Activated B cell treated with CpG ODN at 0.5 μM for 24 hours (primary cell): ENCODE measurements at regions of chr14 and their contacts with region 1.

Region 1: GRCh38 chr14:76812211-76813044 is at the start of gene ANGEL1:
- DNase-seq: peak; percentile 97
- ATAC-seq: peak; percentile 95
- H3K4me3 Mint-ChIP-seq: peak within 1 kb of the TSS; percentile 95
- H3K27ac Mint-ChIP-seq: peak within 1 kb of the TSS; percentile 91
- H3K4me1 Mint-ChIP-seq: peaks cover 25% of the 10 kb centered on the region
- H3K27me3 Mint-ChIP-seq: no peaks in the 10 kb centered on the region
- CTCF ChIP-seq: no peak
- total RNA-seq, gene ANGEL1: 14.9 and 17.9 TPM in 2 replicates

Region 2: GRCh38 chr14:76151398-76152339 is 660.8 kb before region 1 on chr14 and contains the start of gene GPATCH2L:
- CTCF ChIA-PET with region 1: no interaction called
- POLR2A ChIA-PET with region 1: no interaction called
- intact Hi-C with region 1: loop called (anchors 5 kb)
- DNase-seq: peak; percentile 97
- ATAC-seq: peak; percentile 93
- H3K4me3 Mint-ChIP-seq: peak within 1 kb of the TSS; percentile 97
- H3K27ac Mint-ChIP-seq: peak within 1 kb of the TSS; percentile 94
- H3K4me1 Mint-ChIP-seq: peaks cover 53% of the 10 kb centered on the region
- H3K27me3 Mint-ChIP-seq: no peaks in the 10 kb centered on the region
- CTCF ChIP-seq: no peak
- total RNA-seq, gene GPATCH2L: 64.8 and 82.3 TPM in 2 replicates

Region 3: GRCh38 chr14:76687611-76688382 is 124.6 kb before region 1 on chr14:
- CTCF ChIA-PET with region 1: no interaction called
- POLR2A ChIA-PET with region 1: no interaction called
- intact Hi-C with region 1: no loop called
- DNase-seq: no peak
- ATAC-seq: no peak
- H3K4me3 Mint-ChIP-seq: no peak overlapping the region
- H3K27ac Mint-ChIP-seq: no peak overlapping the region
- H3K4me1 Mint-ChIP-seq: no peaks in the 10 kb centered on the region
- H3K27me3 Mint-ChIP-seq: peaks cover 18% of the 10 kb centered on the region
- CTCF ChIP-seq: no peak

Region 4: GRCh38 chr14:76699939-76700590 is 112.4 kb before region 1 on chr14:
- CTCF ChIA-PET with region 1: no interaction called
- POLR2A ChIA-PET with region 1: no interaction called
- intact Hi-C with region 1: no loop called
- DNase-seq: no peak
- ATAC-seq: no peak
- H3K4me3 Mint-ChIP-seq: no peak overlapping the region
- H3K27ac Mint-ChIP-seq: no peak overlapping the region
- H3K4me1 Mint-ChIP-seq: no peaks in the 10 kb centered on the region
- H3K27me3 Mint-ChIP-seq: no peaks in the 10 kb centered on the region
- CTCF ChIP-seq: no peak

Region 5: DNA sequence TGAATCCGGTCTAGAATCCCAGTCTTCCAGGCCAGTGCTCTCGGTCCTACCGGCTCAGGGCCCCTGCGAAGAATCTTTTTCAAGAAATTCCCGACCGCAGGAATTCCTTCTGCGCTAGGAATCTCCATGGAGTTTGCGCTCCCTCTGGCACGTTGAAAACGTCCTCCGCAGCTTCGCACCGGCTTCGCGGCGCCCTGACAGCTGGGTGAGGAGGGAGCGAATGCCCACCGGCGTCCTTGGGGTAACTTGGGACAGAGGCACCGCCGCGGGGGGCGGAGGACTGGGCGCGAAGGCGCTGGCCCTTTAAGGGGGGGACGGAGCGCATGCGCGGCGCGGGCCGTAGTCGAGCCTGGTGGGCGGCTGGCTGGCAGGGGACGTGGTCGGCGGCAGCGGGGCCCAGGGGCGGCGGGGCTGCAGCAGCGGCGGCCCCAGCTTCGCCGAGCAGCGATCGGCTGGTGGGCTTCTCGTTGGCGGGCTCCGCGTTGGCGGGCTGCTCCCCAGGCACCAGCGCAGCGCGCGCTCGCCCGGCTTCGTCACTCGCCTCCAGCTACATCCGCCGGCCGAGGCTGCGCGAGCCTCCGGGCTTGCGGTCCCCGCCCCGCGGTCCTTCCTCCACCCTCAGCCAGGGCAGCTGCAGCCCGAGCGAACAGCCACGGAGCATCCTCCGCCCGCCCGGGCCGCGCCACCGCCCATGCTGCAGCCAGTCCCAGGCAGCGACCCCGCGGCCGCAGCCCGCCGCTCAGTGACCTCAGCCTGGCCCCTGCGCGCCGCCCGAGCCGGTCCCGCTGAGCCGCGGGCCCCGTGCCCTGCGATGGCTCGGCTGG is 51.1 kb before region 1 on chr14 and contains the start of gene VASH1:
- CTCF ChIA-PET with region 1: no interaction called
- POLR2A ChIA-PET with region 1: no interaction called
- intact Hi-C with region 1: loop called (anchors 2 kb)
- DNase-seq: peak; percentile 58
- ATAC-seq: peak; percentile 91
- H3K4me3 Mint-ChIP-seq: peak within 1 kb of the TSS; percentile 79
- H3K27ac Mint-ChIP-seq: peak within 1 kb of the TSS; percentile 12
- H3K4me1 Mint-ChIP-seq: peaks cover 11% of the 10 kb centered on the region
- H3K27me3 Mint-ChIP-seq: peaks cover 40% of the 10 kb centered on the region
- CTCF ChIP-seq: no peak
- total RNA-seq, gene VASH1: 1.0 TPM in 2 replicates

Region 6: GRCh38 chr14:76904740-76905438 is 92.5 kb after region 1 on chr14:
- CTCF ChIA-PET with region 1: no interaction called
- POLR2A ChIA-PET with region 1: no interaction called
- intact Hi-C with region 1: loop called (anchors 1 kb)
- DNase-seq: peak; percentile 73
- ATAC-seq: peak; percentile 92
- H3K4me3 Mint-ChIP-seq: peak overlapping the region; percentile 63
- H3K27ac Mint-ChIP-seq: peak overlapping the region; percentile 93
- H3K4me1 Mint-ChIP-seq: peaks cover 39% of the 10 kb centered on the region
- H3K27me3 Mint-ChIP-seq: no peaks in the 10 kb centered on the region
- CTCF ChIP-seq: no peak

Region 7: GRCh38 chr14:77053046-77053841 is 240.8 kb after region 1 on chr14:
- CTCF ChIA-PET with region 1: no interaction called
- POLR2A ChIA-PET with region 1: no interaction called
- intact Hi-C with region 1: no loop called
- DNase-seq: peak; percentile 79
- ATAC-seq: peak; percentile 90
- H3K4me3 Mint-ChIP-seq: no peak overlapping the region
- H3K27ac Mint-ChIP-seq: peak overlapping the region; percentile 24
- H3K4me1 Mint-ChIP-seq: peaks cover 8% of the 10 kb centered on the region
- H3K27me3 Mint-ChIP-seq: no peaks in the 10 kb centered on the region
- CTCF ChIP-seq: peak; percentile 74

Region 8: GRCh38 chr14:77097700-77098528 is 285.5 kb after region 1 on chr14 and contains the start of gene CIPC:
- CTCF ChIA-PET with region 1: no interaction called
- POLR2A ChIA-PET with region 1: interaction called, 11 read pairs
- intact Hi-C with region 1: loop called (anchors 1 kb)
- DNase-seq: peak; percentile 96
- ATAC-seq: peak; percentile 86
- H3K4me3 Mint-ChIP-seq: peak within 1 kb of the TSS; percentile 99
- H3K27ac Mint-ChIP-seq: peak within 1 kb of the TSS; percentile 98
- H3K4me1 Mint-ChIP-seq: peaks cover 72% of the 10 kb centered on the region
- H3K27me3 Mint-ChIP-seq: no peaks in the 10 kb centered on the region
- CTCF ChIP-seq: no peak
- total RNA-seq, gene CIPC: 26.6 and 28.5 TPM in 2 replicates

Region 9: GRCh38 chr14:77181603-77182437 is 369.4 kb after region 1 on chr14 and contains the start of gene TMEM63C:
- CTCF ChIA-PET with region 1: no interaction called
- POLR2A ChIA-PET with region 1: no interaction called
- intact Hi-C with region 1: loop called (anchors 1 kb)
- DNase-seq: peak; percentile 44
- ATAC-seq: peak; percentile 89
- H3K4me3 Mint-ChIP-seq: peak within 1 kb of the TSS; percentile 80
- H3K27ac Mint-ChIP-seq: no peak within 1 kb of the TSS
- H3K4me1 Mint-ChIP-seq: peaks cover 20% of the 10 kb centered on the region
- H3K27me3 Mint-ChIP-seq: peaks cover 8% of the 10 kb centered on the region
- CTCF ChIP-seq: no peak
- total RNA-seq, gene TMEM63C: 0.15 and 1.5 TPM in 2 replicates

Region 10: GRCh38 chr14:77799863-77800730 is 987.7 kb after region 1 on chr14 and contains the start of gene ADCK1:
- CTCF ChIA-PET with region 1: no interaction called
- POLR2A ChIA-PET with region 1: no interaction called
- intact Hi-C with region 1: loop called (anchors 2 kb)
- DNase-seq: peak; percentile 86
- ATAC-seq: peak; percentile 91
- H3K4me3 Mint-ChIP-seq: peak within 1 kb of the TSS; percentile 88
- H3K27ac Mint-ChIP-seq: peak within 1 kb of the TSS; percentile 88
- H3K4me1 Mint-ChIP-seq: peaks cover 7% of the 10 kb centered on the region
- H3K27me3 Mint-ChIP-seq: no peaks in the 10 kb centered on the region
- CTCF ChIP-seq: no peak
- total RNA-seq, gene ADCK1: 8.6 and 10.4 TPM in 2 replicates